ENCODE measurements at regions of chr6 and their contacts with region 1.

Region 1: GRCh38 chr6:42390228-42390934 is 61.3 kb downstream of the TRERF1 start:
- DNase-seq: peak; percentile 85
- ATAC-seq: peak; percentile 89
- H3K4me3 Mint-ChIP-seq: peak overlapping the region; percentile 63
- H3K27ac Mint-ChIP-seq: peak overlapping the region; percentile 97
- H3K4me1 Mint-ChIP-seq: peaks cover 98% of the 10 kb centered on the region
- H3K27me3 Mint-ChIP-seq: no peaks in the 10 kb centered on the region

Region 2: GRCh38 chr6:40852779-40853373 is 1537.5 kb before region 1 on chr6:
- CTCF ChIA-PET with region 1: no interaction called
- POLR2A ChIA-PET with region 1: no interaction called
- intact Hi-C with region 1: no loop called
- DNase-seq: peak; percentile 37
- ATAC-seq: peak; percentile 44
- H3K4me3 Mint-ChIP-seq: no peak overlapping the region
- H3K27ac Mint-ChIP-seq: peak overlapping the region; percentile 1
- H3K4me1 Mint-ChIP-seq: peaks cover 5% of the 10 kb centered on the region
- H3K27me3 Mint-ChIP-seq: peaks cover 2% of the 10 kb centered on the region

Region 3: DNA sequence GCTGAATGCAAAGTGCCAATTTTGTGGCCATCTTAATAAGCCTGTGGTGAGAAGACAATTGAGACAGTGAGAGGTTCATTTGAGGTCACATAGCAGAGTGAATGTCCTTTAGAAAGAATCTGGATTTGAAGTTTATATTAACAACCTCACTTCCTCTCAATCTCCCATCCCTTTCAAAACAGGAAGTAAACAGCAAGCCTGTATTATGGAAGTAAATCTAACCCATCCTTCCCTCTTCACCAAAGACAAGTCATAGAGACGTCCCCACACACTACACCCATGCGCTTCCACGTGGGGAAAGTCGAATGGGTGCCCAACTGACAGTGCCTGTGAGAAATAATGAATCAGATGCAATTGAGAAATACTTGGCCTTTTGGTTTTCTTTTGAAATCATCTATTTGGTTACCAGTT is 419.9 kb before region 1 on chr6:
- CTCF ChIA-PET with region 1: no interaction called
- POLR2A ChIA-PET with region 1: no interaction called
- intact Hi-C with region 1: loop called in 1 of 2 experiments (anchors 10 kb)
- DNase-seq: peak; percentile 84
- ATAC-seq: peak; percentile 85
- H3K4me3 Mint-ChIP-seq: peak overlapping the region; percentile 45
- H3K27ac Mint-ChIP-seq: peak overlapping the region; percentile 93
- H3K4me1 Mint-ChIP-seq: peaks cover 89% of the 10 kb centered on the region
- H3K27me3 Mint-ChIP-seq: no peaks in the 10 kb centered on the region

Region 4: DNA sequence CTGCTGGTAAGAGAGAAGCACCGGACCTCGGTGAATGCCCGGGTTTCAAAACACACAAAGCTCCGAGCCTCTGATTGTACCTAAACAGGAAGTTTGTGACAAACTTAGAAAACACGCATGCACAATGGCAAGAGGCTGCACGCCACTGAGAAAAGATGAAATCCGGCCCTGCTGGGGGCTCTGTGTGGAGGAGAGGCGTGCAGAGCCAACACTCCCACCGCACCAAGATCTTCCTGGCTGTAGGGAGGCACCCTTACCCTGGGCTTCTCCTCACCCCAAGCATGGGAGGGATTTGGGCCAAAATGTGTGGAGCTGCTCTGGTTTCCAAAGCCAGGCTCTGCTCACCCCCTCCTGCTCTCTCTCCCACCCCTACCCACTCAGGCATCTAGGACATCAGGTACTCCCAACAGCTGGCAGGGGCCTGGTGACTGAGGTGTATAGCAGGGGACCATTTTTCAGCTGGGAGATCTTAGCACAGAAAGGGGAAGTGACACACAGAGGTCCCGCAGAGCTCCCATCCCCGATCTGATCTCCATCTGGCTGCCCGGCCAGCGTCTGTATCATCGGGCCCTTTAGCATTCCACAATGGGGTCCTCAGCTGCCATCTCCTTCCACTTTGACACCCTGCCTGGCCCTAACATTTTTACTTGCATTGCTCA is 22.9 kb before region 1 on chr6:
- CTCF ChIA-PET with region 1: interaction called, 9 read pairs
- POLR2A ChIA-PET with region 1: interaction called, 10 read pairs
- intact Hi-C with region 1: loop called (anchors 1 kb)
- DNase-seq: peak; percentile 41
- ATAC-seq: peak; percentile 45
- H3K4me3 Mint-ChIP-seq: peak overlapping the region; percentile 64
- H3K27ac Mint-ChIP-seq: peak overlapping the region; percentile 77
- H3K4me1 Mint-ChIP-seq: peaks cover 69% of the 10 kb centered on the region
- H3K27me3 Mint-ChIP-seq: no peaks in the 10 kb centered on the region

Region 5: GRCh38 chr6:42423244-42423643 is 32.9 kb after region 1 on chr6:
- CTCF ChIA-PET with region 1: interaction called, 5 read pairs
- POLR2A ChIA-PET with region 1: interaction called, 7 read pairs
- intact Hi-C with region 1: loop called in 1 of 2 experiments (anchors 1 kb)
- DNase-seq: peak; percentile 69
- ATAC-seq: peak; percentile 75
- H3K4me3 Mint-ChIP-seq: peak overlapping the region; percentile 1
- H3K27ac Mint-ChIP-seq: peak overlapping the region; percentile 20
- H3K4me1 Mint-ChIP-seq: peaks cover 63% of the 10 kb centered on the region
- H3K27me3 Mint-ChIP-seq: no peaks in the 10 kb centered on the region

Region 6: GRCh38 chr6:42482174-42482573 is 91.8 kb after region 1 on chr6:
- CTCF ChIA-PET with region 1: no interaction called
- POLR2A ChIA-PET with region 1: no interaction called
- intact Hi-C with region 1: no loop called
- DNase-seq: no peak
- ATAC-seq: no peak
- H3K4me3 Mint-ChIP-seq: no peak overlapping the region
- H3K27ac Mint-ChIP-seq: no peak overlapping the region
- H3K4me1 Mint-ChIP-seq: no peaks in the 10 kb centered on the region
- H3K27me3 Mint-ChIP-seq: no peaks in the 10 kb centered on the region

Region 7: GRCh38 chr6:42498473-42499128 is 108.2 kb after region 1 on chr6:
- CTCF ChIA-PET with region 1: no interaction called
- POLR2A ChIA-PET with region 1: no interaction called
- intact Hi-C with region 1: no loop called
- DNase-seq: no peak
- ATAC-seq: no peak
- H3K4me3 Mint-ChIP-seq: no peak overlapping the region
- H3K27ac Mint-ChIP-seq: no peak overlapping the region
- H3K4me1 Mint-ChIP-seq: peaks cover 16% of the 10 kb centered on the region
- H3K27me3 Mint-ChIP-seq: no peaks in the 10 kb centered on the region

Region 8: GRCh38 chr6:42520786-42521607 is 130.6 kb after region 1 on chr6:
- CTCF ChIA-PET with region 1: interaction called, 3 read pairs
- POLR2A ChIA-PET with region 1: interaction called, 10 read pairs
- intact Hi-C with region 1: loop called (anchors 1 kb)
- DNase-seq: peak; percentile 49
- ATAC-seq: peak; percentile 97
- H3K4me3 Mint-ChIP-seq: no peak overlapping the region
- H3K27ac Mint-ChIP-seq: peak overlapping the region; percentile 76
- H3K4me1 Mint-ChIP-seq: peaks cover 24% of the 10 kb centered on the region
- H3K27me3 Mint-ChIP-seq: no peaks in the 10 kb centered on the region

Measured in activated CD4-positive, alpha-beta T cell treated with anti-CD3 and anti-CD28 coated beads for 36 hours (primary cell).